ENCODE measurements at regions of chr14 and their contacts with region 1.

Region 1: DNA sequence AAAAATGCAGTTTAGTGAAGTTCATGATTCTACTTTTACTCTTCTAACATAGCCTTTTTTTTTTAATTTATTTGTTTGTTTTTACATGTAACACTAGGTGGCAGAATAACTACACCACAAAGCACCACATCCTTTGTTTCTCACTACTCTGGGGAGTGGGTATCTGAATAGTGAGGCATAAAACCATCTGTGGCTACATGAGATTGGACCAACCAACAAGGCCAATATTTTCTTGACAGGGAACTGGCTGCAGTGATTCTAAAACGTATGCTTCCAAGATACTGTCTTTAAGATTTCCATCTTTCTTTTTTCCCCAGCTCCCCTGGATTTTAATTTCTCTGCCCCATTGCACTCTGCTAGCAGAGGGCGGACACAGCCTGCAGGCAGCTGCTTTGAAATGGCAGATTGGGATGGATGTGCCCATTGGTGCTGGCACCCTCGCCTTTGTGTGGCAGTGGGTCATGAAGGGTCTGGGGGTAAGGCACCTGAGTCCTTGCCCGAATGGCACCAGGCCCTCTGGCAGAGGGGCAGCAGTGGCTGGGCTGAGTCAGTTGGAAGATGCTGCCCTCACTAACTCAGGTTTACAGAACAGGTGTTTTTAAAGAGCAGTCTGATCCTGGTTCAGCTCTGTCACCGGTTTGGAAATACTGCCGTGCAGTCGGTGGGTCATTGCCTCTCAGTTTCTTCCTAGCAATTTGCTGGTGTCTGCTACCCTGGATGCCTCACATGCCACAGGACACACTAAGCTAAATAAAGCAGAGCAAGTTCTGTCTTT is 429.1 kb downstream of the RAD51B start:
- DNase-seq: no peak
- H3K4me3 ChIP-seq: no peak overlapping the region
- H3K27ac ChIP-seq: peak overlapping the region; percentile 82 to 87 (median 84)
- H3K4me1 ChIP-seq: peaks cover 72 to 86% (median 83%) of the 10 kb centered on the region in 4 donors
- H3K27me3 ChIP-seq: no peaks in the 10 kb centered on the region
- CTCF ChIP-seq: peak; percentile 55 to 65 (median 63)
- EP300 ChIP-seq: no peak
- POLR2A ChIP-seq: no peak

Region 2: GRCh38 chr14:67943947-67944346 is 304.7 kb before region 1 on chr14:
- intact Hi-C with region 1: loop called (anchors 5 kb)
- DNase-seq: no peak
- H3K4me3 ChIP-seq: no peak overlapping the region
- H3K27ac ChIP-seq: peak overlapping the region in 3 of 4 donors; percentile 66 to 81 (median 76)
- H3K4me1 ChIP-seq: peaks cover 22 to 57% (median 51%) of the 10 kb centered on the region in 4 donors
- H3K27me3 ChIP-seq: no peaks in the 10 kb centered on the region
- CTCF ChIP-seq: peak; percentile 71 to 91 (median 76)
- EP300 ChIP-seq: no peak
- POLR2A ChIP-seq: no peak

Region 3: GRCh38 chr14:68146807-68147206 is 101.9 kb before region 1 on chr14:
- intact Hi-C with region 1: no loop called
- DNase-seq: no peak
- H3K4me3 ChIP-seq: no peak overlapping the region
- H3K27ac ChIP-seq: peak overlapping the region; percentile 82 to 91 (median 86)
- H3K4me1 ChIP-seq: peaks cover 23 to 58% (median 55%) of the 10 kb centered on the region in 4 donors
- H3K27me3 ChIP-seq: no peaks in the 10 kb centered on the region
- CTCF ChIP-seq: no peak
- EP300 ChIP-seq: no peak
- POLR2A ChIP-seq: no peak

Region 4: DNA sequence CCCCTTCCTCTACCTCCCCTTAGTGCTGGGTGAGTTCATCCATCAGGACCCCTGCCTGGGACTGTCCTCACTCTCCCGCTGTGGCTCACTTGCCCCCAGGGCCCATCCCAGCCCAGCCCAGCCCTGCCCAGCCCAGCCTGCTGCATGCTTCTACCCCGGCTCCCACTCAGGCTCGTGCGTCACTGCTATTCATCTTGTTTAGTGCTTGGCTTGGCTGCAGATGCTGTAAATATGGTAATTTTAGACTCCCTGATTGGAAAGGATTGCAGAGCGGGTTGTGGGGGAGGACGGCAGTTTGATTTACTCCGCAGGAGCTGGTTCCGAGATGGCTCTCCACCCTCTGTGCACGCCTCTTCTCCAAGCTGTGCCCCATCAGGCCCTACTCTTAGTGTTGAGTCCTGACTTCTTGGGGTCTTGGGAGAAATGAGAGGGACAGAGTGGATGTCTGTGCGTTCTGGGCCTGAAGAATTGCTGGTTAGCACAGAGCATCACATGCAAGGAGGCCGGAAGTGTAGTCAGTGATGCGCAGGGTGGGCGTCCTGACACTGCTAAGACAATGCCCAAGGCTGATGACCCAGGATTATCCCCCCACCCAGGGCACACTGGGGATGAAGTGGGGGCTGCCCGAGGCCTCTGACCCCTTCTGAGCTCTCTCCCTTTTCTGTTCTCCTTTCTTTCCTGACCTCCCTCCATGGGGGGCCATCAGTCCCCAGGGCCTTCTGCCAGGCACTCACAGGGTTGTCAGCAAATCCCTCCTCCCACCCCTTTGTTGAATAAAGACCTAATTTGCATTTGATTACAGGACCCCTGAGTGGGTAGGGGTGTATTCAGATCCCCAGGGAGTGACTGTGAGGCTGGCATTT is 299.8 kb after region 1 on chr14:
- intact Hi-C with region 1: loop called (anchors 5 kb)
- DNase-seq: peak; percentile 94
- H3K4me3 ChIP-seq: peak overlapping the region in 1 of 4 donors; percentile 1
- H3K27ac ChIP-seq: peak overlapping the region; percentile 90 to 96 (median 95)
- H3K4me1 ChIP-seq: peaks cover 74 to 100% (median 94%) of the 10 kb centered on the region in 4 donors
- H3K27me3 ChIP-seq: no peaks in the 10 kb centered on the region
- CTCF ChIP-seq: no peak
- EP300 ChIP-seq: peak; percentile 88
- POLR2A ChIP-seq: no peak

Region 5: GRCh38 chr14:68665131-68665530 is 416.5 kb after region 1 on chr14:
- intact Hi-C with region 1: loop called (anchors 5 kb)
- DNase-seq: no peak
- H3K4me3 ChIP-seq: no peak overlapping the region
- H3K27ac ChIP-seq: peak overlapping the region; percentile 78 to 89 (median 87)
- H3K4me1 ChIP-seq: peaks cover 37 to 98% (median 87%) of the 10 kb centered on the region in 4 donors
- H3K27me3 ChIP-seq: no peaks in the 10 kb centered on the region
- CTCF ChIP-seq: no peak
- EP300 ChIP-seq: no peak
- POLR2A ChIP-seq: no peak

Region 6: GRCh38 chr14:68788996-68789820 is 540.5 kb after region 1 on chr14:
- intact Hi-C with region 1: loop called (anchors 2 kb)
- DNase-seq: no peak
- H3K4me3 ChIP-seq: peak overlapping the region; percentile 83 to 95 (median 87)
- H3K27ac ChIP-seq: peak overlapping the region; percentile 99 to 100 (median 100)
- H3K4me1 ChIP-seq: peaks cover 15 to 51% (median 42%) of the 10 kb centered on the region in 4 donors
- H3K27me3 ChIP-seq: peaks cover 0 to 4% (median 0%) of the 10 kb centered on the region in 4 donors
- CTCF ChIP-seq: peak; percentile 72 to 82 (median 73)
- EP300 ChIP-seq: no peak
- POLR2A ChIP-seq: peak; percentile 9

Region 7: DNA sequence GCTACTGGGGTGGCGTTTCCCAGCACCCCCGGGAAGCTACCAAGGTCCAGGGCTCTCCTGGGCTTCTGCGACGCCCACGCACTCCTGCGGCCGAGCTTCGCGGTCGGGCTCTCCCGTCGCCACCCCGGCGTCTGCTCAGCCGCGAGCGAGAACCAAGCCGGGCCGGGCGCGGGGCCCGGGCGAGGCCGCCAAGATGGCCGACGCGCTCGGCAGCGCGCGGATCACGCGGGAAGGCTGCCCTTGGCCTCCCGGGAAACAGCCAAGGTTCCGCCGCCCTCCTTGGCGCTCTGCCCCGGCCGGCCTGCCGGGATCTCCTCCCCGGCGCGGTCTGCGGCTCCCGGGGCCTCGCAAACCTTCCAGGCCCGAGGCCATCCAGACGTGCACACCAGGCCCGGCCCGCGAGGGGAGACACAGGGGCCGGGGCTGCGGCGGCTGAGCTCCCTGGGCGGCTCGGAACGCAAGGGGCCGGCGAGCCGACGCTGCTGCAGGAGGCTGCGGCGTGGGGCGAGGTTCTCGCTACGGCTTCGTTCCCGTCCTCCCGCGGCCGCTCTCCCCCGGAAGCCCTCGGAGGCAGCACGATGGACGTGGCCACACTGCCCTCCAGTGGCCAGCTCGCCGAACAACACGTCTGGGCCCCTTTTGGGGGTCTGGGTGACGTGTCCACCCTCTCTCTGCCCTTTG is 567.7 kb after region 1 on chr14:
- intact Hi-C with region 1: loop called (anchors 2 kb)
- DNase-seq: no peak
- H3K4me3 ChIP-seq: peak overlapping the region; percentile 61 to 68 (median 63)
- H3K27ac ChIP-seq: peak overlapping the region; percentile 96 to 98 (median 97)
- H3K4me1 ChIP-seq: peaks cover 39 to 82% (median 78%) of the 10 kb centered on the region in 4 donors
- H3K27me3 ChIP-seq: no peaks in the 10 kb centered on the region
- CTCF ChIP-seq: peak; percentile 97 to 99 (median 98)
- EP300 ChIP-seq: no peak
- POLR2A ChIP-seq: no peak

Measured in esophagus muscularis mucosa (tissue), 4 donors.